ENCODE measurements at regions of chr6 and their contacts with region 1.

Region 1: DNA sequence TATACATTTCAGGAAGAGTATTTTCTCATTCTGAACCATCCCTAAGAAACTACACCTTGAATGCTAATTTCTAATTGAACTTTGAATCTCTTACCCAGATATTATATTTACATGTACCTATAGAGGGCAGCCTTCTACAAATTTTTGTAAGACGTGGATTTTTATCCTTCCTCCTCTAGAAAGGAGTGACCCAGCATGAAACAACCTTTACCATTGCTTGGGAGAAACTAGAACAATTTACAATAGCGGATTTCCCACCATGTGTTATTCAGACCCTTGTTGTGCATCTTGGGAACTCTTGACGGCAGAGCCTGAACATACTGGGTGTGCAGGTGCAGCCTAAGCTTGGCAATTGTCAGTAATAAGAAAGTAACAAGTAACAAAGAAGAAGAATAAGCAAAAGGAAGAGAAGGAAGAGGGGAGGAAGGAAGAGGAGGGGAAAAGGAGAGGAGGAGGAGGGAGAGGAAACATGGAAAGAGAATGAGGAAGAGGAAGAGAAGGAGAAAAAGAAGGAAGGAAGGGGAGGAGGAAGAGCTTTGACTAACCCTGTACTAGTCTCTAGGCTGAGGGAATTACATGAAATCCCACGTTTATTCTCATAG is 10.8 kb upstream of the TAAR1 start:
- DNase-seq: peak; percentile 29
- CTCF ChIP-seq: peak; percentile 36

Region 2: GRCh38 chr6:132161283-132161682 is 508.5 kb before region 1 on chr6:
- CTCF ChIA-PET with region 1: no interaction called
- POLR2A ChIA-PET with region 1: no interaction called
- DNase-seq: no peak
- CTCF ChIP-seq: peak; percentile 57

Region 3: DNA sequence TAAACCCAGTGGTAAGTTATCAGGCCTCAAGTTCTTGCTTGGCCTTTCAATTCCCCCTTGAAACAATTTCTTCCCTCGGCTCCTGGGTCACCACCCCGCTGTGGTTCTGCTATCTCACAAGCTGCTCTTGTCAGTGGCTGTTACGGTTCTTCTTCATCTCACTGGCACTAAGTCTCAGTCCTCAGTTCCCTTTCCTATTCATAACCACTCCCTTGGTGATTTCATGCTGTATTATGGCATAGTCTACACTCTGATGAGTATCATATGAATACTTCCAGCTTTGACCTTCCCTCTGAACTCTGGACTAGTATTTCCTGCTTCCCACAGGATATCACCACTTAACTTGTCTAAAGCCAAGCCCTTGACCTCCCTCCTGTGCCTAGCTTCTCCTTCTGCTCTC is 18.7 kb before region 1 on chr6:
- CTCF ChIA-PET with region 1: interaction called, 11 read pairs
- POLR2A ChIA-PET with region 1: no interaction called
- DNase-seq: no peak
- CTCF ChIP-seq: no peak

Region 4: DNA sequence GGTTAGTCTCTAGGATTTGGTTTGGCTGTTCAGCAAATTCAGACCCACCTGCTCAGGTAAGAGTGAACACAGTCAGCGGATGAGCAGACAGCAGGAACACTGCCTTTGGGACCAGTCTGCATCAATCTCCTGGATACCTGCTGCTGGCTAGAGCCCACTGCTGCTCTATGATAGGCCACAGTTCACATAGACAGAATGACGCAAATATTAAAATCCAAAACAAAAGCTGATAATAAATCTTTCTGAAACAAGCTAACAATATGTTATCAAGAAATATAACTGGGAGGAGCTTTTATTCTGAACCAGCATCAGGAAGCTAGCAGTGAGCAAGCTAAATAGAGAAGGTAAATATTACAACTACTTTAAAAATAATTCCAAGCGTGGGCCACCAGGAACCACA is 10.7 kb before region 1 on chr6 and contains the start of gene TAAR1:
- CTCF ChIA-PET with region 1: interaction called, 25 read pairs
- POLR2A ChIA-PET with region 1: no interaction called
- DNase-seq: no peak
- CTCF ChIP-seq: no peak

Region 5: DNA sequence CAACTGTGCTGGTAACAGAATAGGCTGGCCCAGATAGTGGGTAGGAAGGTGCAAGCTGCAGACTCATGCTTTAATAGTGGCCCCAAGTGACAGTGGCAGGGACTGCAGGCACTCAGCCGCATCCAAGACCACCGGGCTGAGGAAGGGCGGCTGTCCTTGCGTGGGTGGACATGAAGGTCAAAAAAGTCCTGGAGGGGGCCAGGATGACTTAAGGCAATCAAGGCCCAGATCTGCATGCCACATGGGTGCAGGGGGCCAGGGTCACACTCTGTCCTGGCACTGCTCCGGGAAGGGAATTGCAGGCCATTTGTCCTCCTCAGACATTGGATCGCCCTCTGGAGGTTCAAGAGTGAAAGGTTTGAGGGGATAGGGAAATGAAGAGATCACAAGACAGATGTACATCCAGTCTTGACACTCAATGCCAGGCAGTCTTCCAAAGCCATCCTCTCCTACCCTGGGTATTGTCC is 98.3 kb after region 1 on chr6:
- CTCF ChIA-PET with region 1: interaction called, 22 read pairs
- POLR2A ChIA-PET with region 1: no interaction called
- DNase-seq: peak; percentile 48
- CTCF ChIP-seq: peak; percentile 69

Measured in GM10248 (cell line).